ENCODE measurements at regions of chr11 and their contacts with region 1.

Region 1: GRCh38 chr11:80103142-80103859 is 662.5 kb upstream of the TENM4 start:
- DNase-seq: peak; percentile 6 to 64
- H3K4me3 ChIP-seq: no peak overlapping the region
- H3K27ac ChIP-seq: no peak overlapping the region
- H3K4me1 ChIP-seq: no peaks in the 10 kb centered on the region
- H3K27me3 ChIP-seq: no peaks in the 10 kb centered on the region
- CTCF ChIP-seq: no peak

Region 2: GRCh38 chr11:80320765-80321164 is 217.5 kb after region 1 on chr11:
- CTCF ChIA-PET with region 1: no interaction called
- POLR2A ChIA-PET with region 1: interaction called, 37 read pairs
- intact Hi-C with region 1: no loop called
- DNase-seq: no peak
- H3K4me3 ChIP-seq: no peak overlapping the region
- H3K27ac ChIP-seq: no peak overlapping the region
- H3K4me1 ChIP-seq: no peaks in the 10 kb centered on the region
- H3K27me3 ChIP-seq: no peaks in the 10 kb centered on the region
- CTCF ChIP-seq: peak; percentile 28; the same call in 1 of the 2 replicates